Heart right ventricle (tissue), 16 donors: ENCODE measurements at regions of chr11 and their contacts with region 1.

Region 1: GRCh38 chr11:10808553-10809372 is at the start of gene EIF4G2:
- DNase-seq: peak; percentile 98
- ATAC-seq: peak; percentile 95 to 98 (median 98)
- H3K4me3 ChIP-seq: peak within 1 kb of the TSS; percentile 76 to 98 (median 92)
- H3K27ac ChIP-seq: peak within 1 kb of the TSS; percentile 89 to 100 (median 100)
- H3K4me1 ChIP-seq: peaks cover 0 to 50% (median 40%) of the 10 kb centered on the region in 9 donors
- H3K27me3 ChIP-seq: no peaks in the 10 kb centered on the region
- CTCF ChIP-seq: no peak
- total RNA-seq, gene EIF4G2: 623 to 1,076 (median 970) TPM

Region 2: GRCh38 chr11:9573052-9573774 is 1235.5 kb before region 1 on chr11 and contains the start of gene WEE1:
- intact Hi-C with region 1: loop called in 1 of 10 experiments (anchors 5 kb)
- DNase-seq: peak; percentile 98 to 99
- ATAC-seq: peak; percentile 94 to 98 (median 96)
- H3K4me3 ChIP-seq: peak within 1 kb of the TSS; percentile 54 to 95 (median 82)
- H3K27ac ChIP-seq: peak within 1 kb of the TSS; percentile 86 to 98 (median 96)
- H3K4me1 ChIP-seq: peaks cover 3 to 57% (median 35%) of the 10 kb centered on the region in 9 donors
- H3K27me3 ChIP-seq: no peaks in the 10 kb centered on the region
- CTCF ChIP-seq: no peak
- total RNA-seq, gene WEE1: 22.9 to 114 (median 59.0) TPM

Region 3: DNA sequence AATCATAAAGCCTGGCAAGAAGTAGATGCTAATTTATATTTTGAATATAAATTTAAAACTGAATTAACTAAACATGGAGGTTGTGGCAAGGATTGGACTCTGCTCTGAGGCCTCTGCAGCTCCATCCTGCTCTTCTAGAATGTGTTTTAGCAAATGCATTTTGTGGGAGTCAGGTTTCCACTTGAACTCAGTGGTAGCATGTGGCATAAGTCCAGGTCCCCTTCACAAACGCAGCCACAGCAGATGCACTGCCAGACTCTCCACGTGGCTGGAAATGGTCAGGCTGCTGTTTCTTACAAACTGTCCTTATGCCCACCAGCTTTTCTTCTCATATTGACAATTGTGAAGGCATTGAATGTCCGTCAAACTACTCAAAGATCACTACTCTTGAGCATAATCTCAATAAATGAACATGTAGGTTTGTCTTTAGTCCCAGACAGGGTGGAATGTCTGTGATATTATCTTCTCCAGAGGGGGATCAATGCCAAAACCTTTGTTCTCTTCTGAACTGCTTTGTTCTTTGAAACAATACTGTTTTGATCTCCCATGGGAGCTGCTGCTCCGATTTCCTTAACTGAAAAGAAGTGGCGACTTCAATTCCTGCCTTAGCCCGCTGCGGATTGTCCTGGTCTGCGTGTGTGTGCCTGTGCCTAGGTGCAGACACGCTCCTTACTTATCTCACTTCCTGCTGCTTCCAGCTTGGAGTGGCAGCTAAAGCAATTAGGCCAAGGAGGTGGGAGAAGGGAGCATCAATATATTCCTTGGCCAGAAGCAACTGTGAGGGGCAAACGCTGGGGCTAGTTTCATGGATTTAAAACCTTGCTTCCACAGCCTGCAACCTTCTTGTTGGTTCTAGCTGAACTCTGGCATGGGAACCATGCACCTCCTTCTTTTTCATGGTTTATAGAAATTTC is 24.3 kb before region 1 on chr11:
- intact Hi-C with region 1: loop called in 1 of 10 experiments (anchors 1 kb)
- DNase-seq: peak; percentile 26 to 52
- ATAC-seq: peak; percentile 53 to 87 (median 80)
- H3K4me3 ChIP-seq: no peak overlapping the region
- H3K27ac ChIP-seq: peak overlapping the region in 6 of 10 donors; percentile 10 to 57 (median 36)
- H3K4me1 ChIP-seq: peaks cover 6 to 43% (median 25%) of the 10 kb centered on the region in 9 donors
- H3K27me3 ChIP-seq: no peaks in the 10 kb centered on the region
- CTCF ChIP-seq: no peak

Region 4: GRCh38 chr11:10844796-10845195 is 36.0 kb after region 1 on chr11:
- intact Hi-C with region 1: loop called in 3 of 10 experiments (anchors 5 kb)
- DNase-seq: no peak
- ATAC-seq: peak in 1 of 8 donors; percentile 29
- H3K4me3 ChIP-seq: no peak overlapping the region
- H3K27ac ChIP-seq: peak overlapping the region in 7 of 10 donors; percentile 5 to 61 (median 31)
- H3K4me1 ChIP-seq: peaks cover 0 to 27% (median 5%) of the 10 kb centered on the region in 9 donors
- H3K27me3 ChIP-seq: no peaks in the 10 kb centered on the region
- CTCF ChIP-seq: no peak

Region 5: GRCh38 chr11:10899121-10899830 is 90.5 kb after region 1 on chr11:
- intact Hi-C with region 1: loop called in 2 of 10 experiments (anchors 5 kb)
- DNase-seq: peak; percentile 46 to 57
- ATAC-seq: peak; percentile 18 to 78 (median 64)
- H3K4me3 ChIP-seq: peak overlapping the region in 1 of 10 donors; percentile 6
- H3K27ac ChIP-seq: peak overlapping the region; percentile 78 to 96 (median 92)
- H3K4me1 ChIP-seq: peaks cover 18 to 59% (median 41%) of the 10 kb centered on the region in 9 donors
- H3K27me3 ChIP-seq: no peaks in the 10 kb centered on the region
- CTCF ChIP-seq: no peak

Region 6: GRCh38 chr11:10911907-10912306 is 103.1 kb after region 1 on chr11:
- intact Hi-C with region 1: loop called in 3 of 10 experiments (anchors 2 to 5 kb)
- DNase-seq: no peak
- ATAC-seq: peak; percentile 25 to 80 (median 52)
- H3K4me3 ChIP-seq: no peak overlapping the region
- H3K27ac ChIP-seq: peak overlapping the region in 6 of 10 donors; percentile 6 to 71 (median 38)
- H3K4me1 ChIP-seq: peaks cover 0 to 27% (median 16%) of the 10 kb centered on the region in 9 donors
- H3K27me3 ChIP-seq: no peaks in the 10 kb centered on the region
- CTCF ChIP-seq: peak in 3 of 9 donors; percentile 10 to 34 (median 28)

Region 7: DNA sequence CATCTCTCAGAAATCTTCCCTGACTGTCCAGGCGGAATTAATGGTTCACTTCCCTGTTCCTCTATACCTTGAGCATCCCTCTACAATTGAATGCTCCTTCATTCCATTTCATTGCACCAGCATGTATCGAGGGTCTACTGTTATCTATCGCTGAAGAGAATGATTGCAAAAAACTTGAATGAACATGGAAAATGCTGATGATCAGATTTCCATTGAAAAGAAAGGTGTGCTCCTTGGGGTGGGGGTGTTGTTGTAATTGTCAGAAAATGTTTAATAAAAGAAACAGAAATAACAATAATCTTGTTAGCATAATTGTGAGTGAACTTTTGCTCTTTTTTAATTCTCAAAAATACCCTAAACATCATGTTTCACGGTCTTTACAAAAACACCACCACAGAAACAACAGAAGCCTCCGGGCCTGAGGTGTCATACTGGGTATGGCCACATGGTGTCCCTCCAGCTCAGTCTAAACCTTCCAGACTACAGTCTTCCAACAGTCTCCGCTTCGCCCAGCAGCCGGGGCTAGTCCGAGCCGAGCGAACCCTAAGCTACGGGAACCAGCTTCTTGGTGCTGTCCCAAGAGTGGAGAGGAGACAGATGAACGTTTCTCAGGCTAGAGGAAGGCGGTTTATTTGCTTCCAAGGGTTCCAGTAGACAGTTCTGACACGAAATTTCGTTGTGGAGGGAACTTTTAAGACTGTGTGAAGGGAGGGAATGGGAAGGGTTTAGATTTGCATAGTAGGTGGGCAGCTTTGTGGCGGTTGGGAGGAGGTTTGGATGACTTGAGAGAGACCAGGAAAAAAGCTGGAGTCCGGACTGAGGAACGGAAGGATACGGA is 124.9 kb after region 1 on chr11:
- intact Hi-C with region 1: loop called in 2 of 10 experiments (anchors 2 to 10 kb)
- DNase-seq: peak; percentile 87 to 91
- ATAC-seq: peak; percentile 78 to 93 (median 89)
- H3K4me3 ChIP-seq: peak overlapping the region; percentile 7 to 56 (median 52)
- H3K27ac ChIP-seq: peak overlapping the region; percentile 28 to 89 (median 72)
- H3K4me1 ChIP-seq: peaks cover 0 to 33% (median 17%) of the 10 kb centered on the region in 9 donors
- H3K27me3 ChIP-seq: peaks cover 0 to 49% (median 0%) of the 10 kb centered on the region in 7 donors
- CTCF ChIP-seq: peak; percentile 90 to 99 (median 95)